ENCODE measurements at regions of chr10 and their contacts with region 1.

Region 1: DNA sequence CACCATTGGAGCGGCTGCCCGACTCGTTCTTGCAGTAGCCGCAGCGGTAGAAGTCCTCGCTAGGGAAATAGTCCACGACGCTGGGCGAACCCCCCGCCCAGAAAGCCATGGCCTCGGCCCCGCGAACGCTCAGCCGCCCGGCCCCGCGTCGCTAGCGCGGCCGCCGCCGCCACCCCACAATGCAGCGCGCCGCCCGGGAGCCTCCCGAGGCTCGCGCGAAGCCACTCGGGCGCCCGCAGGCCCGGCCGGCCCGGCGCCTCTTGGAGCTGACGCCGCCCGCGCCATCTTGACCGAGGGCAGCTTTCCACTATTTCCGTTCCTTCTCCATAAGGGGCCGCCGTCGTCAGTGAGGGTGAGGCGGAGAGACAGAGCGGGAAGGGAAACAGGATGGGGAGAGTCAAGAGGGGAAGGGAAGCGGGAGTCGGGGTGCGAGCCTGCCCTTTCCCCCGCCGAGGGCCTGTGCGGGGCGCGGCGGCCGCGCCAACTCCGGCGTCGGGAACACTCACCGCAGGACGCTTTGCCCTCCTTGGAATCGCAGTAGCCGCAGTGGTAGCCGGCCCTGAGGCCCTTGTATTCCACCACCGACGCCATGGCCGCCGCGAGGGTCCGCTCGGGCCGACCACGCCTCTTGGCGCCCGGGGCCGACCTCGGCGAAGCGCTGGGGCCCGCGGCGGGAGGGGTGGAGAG is at the start of gene ATE1:
- DNase-seq: peak; percentile 84 to 98 (median 90)

Region 2: GRCh38 chr10:120850911-120851865 is 1076.8 kb before region 1 on chr10 and contains the start of gene WDR11:
- intact Hi-C with region 1: loop called (anchors 5 kb)
- DNase-seq: peak; percentile 87 to 98 (median 90)

Region 3: DNA sequence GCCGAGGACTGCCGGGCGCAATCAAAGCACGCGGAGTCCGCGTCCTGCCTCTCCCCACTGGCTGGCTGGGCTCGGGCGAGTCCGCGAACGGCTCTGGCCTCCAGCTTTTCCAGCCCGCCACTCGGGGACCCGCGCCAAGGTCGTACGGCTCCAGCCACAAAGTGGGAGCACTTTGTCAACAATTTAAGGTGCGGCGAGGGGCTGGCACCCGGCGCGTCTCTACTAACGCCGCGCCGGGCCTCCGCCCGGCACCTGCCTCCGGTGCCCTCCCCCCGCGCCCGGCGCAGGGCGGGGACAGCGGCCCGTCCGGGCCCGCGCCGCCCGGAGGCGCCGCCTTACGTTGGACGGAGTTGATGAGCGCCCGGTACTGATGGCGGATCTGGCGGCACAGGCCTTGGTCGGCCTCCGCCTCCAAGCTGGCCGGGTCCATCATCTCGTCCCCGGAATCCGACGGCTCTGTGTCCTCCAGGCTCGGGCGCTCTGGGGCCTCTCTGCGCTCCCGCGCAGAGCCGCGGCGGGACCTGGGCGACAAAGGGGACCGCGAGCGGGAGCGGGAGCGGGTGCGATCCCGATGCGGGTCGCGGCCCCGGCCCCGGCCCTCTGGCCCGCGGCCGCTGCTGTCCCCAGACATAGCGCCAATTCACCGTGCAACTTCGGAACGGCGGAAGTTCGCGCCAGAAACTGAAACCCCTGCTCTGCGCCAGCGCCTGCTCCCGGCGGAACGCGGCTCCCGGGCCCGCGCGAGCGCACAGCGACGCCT is 46.7 kb after region 1 on chr10 and contains the start of gene NSMCE4A:
- intact Hi-C with region 1: loop called (anchors 1 kb)
- DNase-seq: peak; percentile 63 to 96 (median 70)

Region 4: GRCh38 chr10:122374237-122374869 is 446.4 kb after region 1 on chr10 and contains the start of gene PLEKHA1:
- intact Hi-C with region 1: loop called (anchors 5 kb)
- DNase-seq: peak; percentile 91 to 99 (median 94)

Region 5: GRCh38 chr10:123637303-123637880 is 1709.4 kb after region 1 on chr10:
- intact Hi-C with region 1: no loop called
- DNase-seq: no peak

Measured in posterior cingulate gyrus (tissue), 11 donors.